Activated CD4-positive, alpha-beta T cell treated with anti-CD3 and anti-CD28 coated beads, Interleukin-2, amount 10 ng/mL, durations not matched to agents 24 days and 14 days (primary cell): ENCODE measurements at regions of chr19 and their contacts with region 1.

Region 1: GRCh38 chr19:58475714-58476497 is at the start of gene ZNF446:
- DNase-seq: peak; percentile 99
- H3K4me3 Mint-ChIP-seq: peak within 1 kb of the TSS; percentile 93
- H3K27ac Mint-ChIP-seq: peak within 1 kb of the TSS; percentile 97
- H3K4me1 Mint-ChIP-seq: peaks cover 19% of the 10 kb centered on the region
- H3K27me3 Mint-ChIP-seq: no peaks in the 10 kb centered on the region
- total RNA-seq, gene ZNF446: 6.3 and 6.8 TPM in 2 replicates

Region 2: DNA sequence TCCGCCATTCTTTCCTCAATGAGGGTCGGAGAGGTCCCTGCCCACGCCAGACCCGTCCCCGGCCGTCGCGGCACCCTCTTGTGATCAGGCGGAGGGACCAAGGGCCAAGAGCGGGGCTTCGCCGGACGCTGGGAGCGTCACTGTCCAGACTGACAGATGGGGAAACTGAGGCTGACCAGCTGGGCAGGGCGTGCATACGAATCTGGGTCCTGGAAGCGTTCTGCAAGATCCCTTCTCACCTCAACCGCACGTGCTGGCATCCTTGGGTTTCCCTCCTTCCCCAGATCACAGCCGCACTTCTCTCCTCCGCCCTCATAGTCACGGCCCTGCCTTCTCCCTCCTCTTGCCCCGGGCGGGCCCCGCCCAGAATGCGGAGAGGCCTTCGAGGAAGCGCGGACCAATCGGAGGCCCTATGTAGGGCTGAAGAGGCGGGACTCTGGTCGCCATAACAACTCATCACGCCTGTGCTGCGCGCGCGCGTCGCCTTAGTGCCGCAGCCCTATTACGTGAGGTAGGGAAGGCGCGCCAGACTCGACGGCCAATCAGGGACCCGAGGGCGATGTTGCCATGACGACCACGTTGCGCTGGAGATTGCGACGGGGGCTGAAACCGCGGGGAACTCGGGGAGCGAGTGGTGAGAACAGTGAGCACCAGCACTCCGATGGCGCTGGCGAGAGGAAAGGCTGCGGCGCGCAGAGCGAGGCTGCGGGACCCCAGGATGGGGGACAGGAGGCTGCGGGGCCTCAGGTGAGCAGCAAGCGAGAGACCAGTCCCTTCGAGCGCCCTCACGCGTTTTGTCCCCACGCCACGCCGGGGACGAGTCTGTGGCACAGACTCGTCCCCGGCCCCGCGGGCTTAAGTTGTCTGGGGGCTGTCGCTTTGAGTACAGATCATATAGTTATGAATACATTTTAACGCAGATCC is 74.7 kb before region 1 on chr19:
- intact Hi-C with region 1: loop called (anchors 1 kb)
- DNase-seq: peak; percentile 100
- H3K4me3 Mint-ChIP-seq: peak overlapping the region; percentile 91
- H3K27ac Mint-ChIP-seq: peak overlapping the region; percentile 90
- H3K4me1 Mint-ChIP-seq: peaks cover 10% of the 10 kb centered on the region
- H3K27me3 Mint-ChIP-seq: peaks cover 7% of the 10 kb centered on the region

Region 3: DNA sequence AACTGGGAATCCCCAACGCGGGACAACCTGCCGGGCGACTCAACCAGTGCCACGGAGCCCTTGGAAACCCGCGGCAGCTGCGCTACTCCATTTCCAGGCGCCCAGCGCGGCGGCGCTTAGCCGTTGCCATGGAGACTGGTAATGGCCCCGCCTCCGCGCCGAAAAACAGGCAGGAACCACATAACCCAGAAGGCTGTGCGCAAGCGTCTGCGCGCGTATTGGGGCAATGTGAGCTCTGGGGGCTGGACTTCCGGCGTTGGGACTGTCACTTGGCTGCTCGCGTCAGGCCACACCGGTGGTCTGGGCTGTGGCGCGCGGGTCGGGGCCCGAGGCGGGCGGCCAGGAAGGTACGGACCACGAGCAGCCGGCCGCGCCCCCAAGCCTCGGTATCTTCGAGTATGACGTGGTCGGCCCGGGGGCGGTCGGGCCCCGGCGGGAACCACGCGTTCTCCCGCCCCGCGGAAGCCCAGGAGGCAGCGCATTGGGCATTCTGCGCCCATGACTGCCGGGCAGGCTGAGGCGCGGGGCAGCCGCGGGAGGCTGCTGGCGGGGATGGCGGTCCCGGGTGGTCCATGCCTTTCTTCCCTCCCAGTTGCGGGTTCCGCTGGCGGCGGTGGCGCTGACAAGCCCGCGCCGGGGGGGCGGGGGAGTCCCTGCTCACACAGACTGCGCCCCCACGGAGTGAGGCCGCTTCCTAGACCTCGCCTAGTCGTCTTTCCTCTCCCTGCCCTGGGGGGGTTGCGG is 24.4 kb before region 1 on chr19 and contains the start of gene ZNF324B:
- intact Hi-C with region 1: loop called (anchors 1 kb)
- DNase-seq: peak; percentile 99
- H3K4me3 Mint-ChIP-seq: peak within 1 kb of the TSS; percentile 90
- H3K27ac Mint-ChIP-seq: peak within 1 kb of the TSS; percentile 53
- H3K4me1 Mint-ChIP-seq: peaks cover 21% of the 10 kb centered on the region
- H3K27me3 Mint-ChIP-seq: peaks cover 6% of the 10 kb centered on the region
- total RNA-seq, gene ZNF324B: 14.4 and 15.2 TPM in 2 replicates

Region 4: DNA sequence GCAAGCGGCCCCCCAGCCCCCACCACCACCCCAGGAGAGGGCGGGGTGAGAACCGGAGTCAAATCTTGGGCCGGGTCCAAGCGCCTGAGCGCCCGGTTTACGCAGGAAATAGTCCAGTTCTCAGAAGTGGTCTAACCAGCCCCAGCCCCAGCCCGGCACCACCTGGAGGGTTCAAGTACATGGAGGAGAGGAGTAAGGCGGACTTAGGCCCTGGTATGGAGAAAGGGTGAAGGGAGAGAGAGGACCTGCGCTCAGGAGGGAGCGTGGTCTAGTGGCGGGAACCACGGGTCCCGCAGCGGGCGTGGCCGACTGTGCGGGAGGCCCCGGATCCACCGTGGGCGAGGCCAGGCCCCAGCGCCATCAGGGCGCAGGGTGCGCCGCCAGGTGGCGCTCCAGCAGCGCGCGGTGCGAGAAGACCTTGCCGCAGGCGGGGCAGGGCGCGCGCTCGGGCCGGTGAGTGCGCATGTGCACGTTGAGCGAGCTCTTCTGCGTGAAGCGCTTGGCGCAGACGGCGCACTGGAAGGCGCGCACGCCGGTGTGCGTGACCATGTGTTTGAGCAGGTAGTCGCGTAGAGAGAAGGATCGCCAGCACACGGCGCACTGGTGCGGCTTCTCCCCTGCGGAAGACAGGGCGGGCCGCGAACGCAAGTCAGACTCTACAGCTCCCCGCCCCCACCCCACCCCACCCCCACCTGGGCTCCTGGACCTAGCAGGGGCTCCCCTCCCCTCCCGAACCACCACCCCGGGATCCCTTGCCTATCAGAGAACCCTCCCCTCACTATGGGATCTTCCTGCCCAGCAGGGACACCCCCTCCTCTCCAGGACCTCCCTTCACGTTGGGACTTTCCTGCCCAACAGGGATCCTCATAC is 38.0 kb after region 1 on chr19:
- intact Hi-C with region 1: loop called (anchors 1 kb)
- DNase-seq: peak; percentile 99
- H3K4me3 Mint-ChIP-seq: peak overlapping the region; percentile 91
- H3K27ac Mint-ChIP-seq: peak overlapping the region; percentile 93
- H3K4me1 Mint-ChIP-seq: peaks cover 32% of the 10 kb centered on the region
- H3K27me3 Mint-ChIP-seq: no peaks in the 10 kb centered on the region